ENCODE measurements at regions of chr6 and their contacts with region 1.

Region 1: DNA sequence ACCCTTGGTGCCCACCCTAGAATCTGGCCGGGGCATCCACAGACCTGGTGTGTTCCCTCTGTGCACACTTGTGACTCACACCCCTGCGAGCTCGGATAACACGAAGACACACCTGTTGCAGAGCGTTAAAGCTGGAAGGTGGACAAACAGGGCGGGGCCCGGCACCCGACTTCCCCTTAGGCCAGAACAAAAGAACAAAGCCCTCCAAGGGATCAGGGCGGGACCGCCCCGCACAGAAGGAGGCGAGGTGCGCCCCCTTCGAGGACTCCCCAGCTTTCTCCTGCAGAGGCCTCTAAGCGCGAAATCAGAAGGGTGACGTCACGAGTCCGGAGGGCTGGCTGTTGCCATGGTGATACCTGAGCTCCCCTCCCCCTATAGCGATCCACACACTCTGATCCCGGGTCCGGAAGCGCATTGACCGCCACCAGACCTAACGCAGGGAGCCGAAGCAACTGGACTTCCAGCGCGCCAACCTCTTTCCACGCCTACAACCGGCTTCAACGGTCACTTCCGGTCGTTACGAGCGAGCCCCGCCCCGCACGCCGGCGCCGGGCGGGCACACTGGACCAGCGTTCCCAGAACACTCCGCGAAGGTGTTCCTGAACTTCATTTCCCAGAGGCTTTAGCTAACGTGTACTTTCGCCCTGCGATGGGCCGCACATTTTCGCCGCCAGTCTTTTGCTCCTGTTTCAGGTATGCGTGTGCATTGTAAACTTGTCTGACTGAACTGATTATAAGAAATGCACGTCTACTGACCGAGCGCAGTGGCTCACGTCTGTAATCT is at the start of gene ZNF184:
- DNase-seq: peak; percentile 75 to 97
- H3K4me3 ChIP-seq: peak within 1 kb of the TSS; percentile 65 to 89
- H3K27ac ChIP-seq: peak within 1 kb of the TSS; percentile 84 to 86
- H3K4me1 ChIP-seq: peaks cover 0 to 8% of the 10 kb centered on the region in 2 donors
- H3K27me3 ChIP-seq: no peaks in the 10 kb centered on the region
- CTCF ChIP-seq: peak in 2 of 3 experiments; percentile 7 to 12
- total RNA-seq, gene ZNF184: 2.1 TPM

Region 2: GRCh38 chr6:26553635-26554446 is 919.0 kb before region 1 on chr6:
- intact Hi-C with region 1: loop called (anchors 10 kb)
- DNase-seq: peak; percentile 57 to 93
- H3K4me3 ChIP-seq: peak overlapping the region; percentile 31 to 59
- H3K27ac ChIP-seq: peak overlapping the region; percentile 70 to 75
- H3K4me1 ChIP-seq: peaks cover 0 to 4% of the 10 kb centered on the region in 2 donors
- H3K27me3 ChIP-seq: no peaks in the 10 kb centered on the region
- CTCF ChIP-seq: no peak

Region 3: GRCh38 chr6:27388293-27389197 is 84.3 kb before region 1 on chr6 and contains the start of gene ZNF391:
- intact Hi-C with region 1: loop called (anchors 5 kb)
- DNase-seq: peak; percentile 17 to 88
- H3K4me3 ChIP-seq: peak within 1 kb of the TSS; percentile 68
- H3K27ac ChIP-seq: peak within 1 kb of the TSS; percentile 56 to 62
- H3K4me1 ChIP-seq: peaks cover 0 to 4% of the 10 kb centered on the region in 2 donors
- H3K27me3 ChIP-seq: no peaks in the 10 kb centered on the region
- CTCF ChIP-seq: no peak
- total RNA-seq, gene ZNF391: 0.75 TPM